Activated B cell treated with CpG ODN at 0.5 μM for 24 hours (primary cell): ENCODE measurements at regions of chr16 and their contacts with region 1.

Region 1: GRCh38 chr16:2486645-2487516 is 12.0 kb downstream of the TBC1D24 start:
- DNase-seq: peak; percentile 73
- ATAC-seq: peak; percentile 97
- H3K4me3 Mint-ChIP-seq: peak overlapping the region; percentile 71
- H3K27ac Mint-ChIP-seq: peak overlapping the region; percentile 83
- H3K4me1 Mint-ChIP-seq: peaks cover 26% of the 10 kb centered on the region
- H3K27me3 Mint-ChIP-seq: no peaks in the 10 kb centered on the region
- CTCF ChIP-seq: no peak

Region 2: GRCh38 chr16:2023098-2023925 is 463.6 kb before region 1 on chr16:
- CTCF ChIA-PET with region 1: interaction called, 3 read pairs
- POLR2A ChIA-PET with region 1: interaction called, 3 read pairs
- intact Hi-C with region 1: loop called (anchors 1 kb)
- DNase-seq: peak; percentile 97
- ATAC-seq: peak; percentile 94
- H3K4me3 Mint-ChIP-seq: peak overlapping the region; percentile 79
- H3K27ac Mint-ChIP-seq: peak overlapping the region; percentile 73
- H3K4me1 Mint-ChIP-seq: peaks cover 24% of the 10 kb centered on the region
- H3K27me3 Mint-ChIP-seq: peaks cover 27% of the 10 kb centered on the region
- CTCF ChIP-seq: peak; percentile 82

Region 3: GRCh38 chr16:2251483-2252240 is 235.2 kb before region 1 on chr16 and contains the start of gene ECI1:
- CTCF ChIA-PET with region 1: interaction called, 5 read pairs
- POLR2A ChIA-PET with region 1: interaction called, 4 read pairs
- intact Hi-C with region 1: loop called (anchors 5 kb)
- DNase-seq: peak; percentile 85
- ATAC-seq: peak; percentile 90
- H3K4me3 Mint-ChIP-seq: peak within 1 kb of the TSS; percentile 86
- H3K27ac Mint-ChIP-seq: peak within 1 kb of the TSS; percentile 90
- H3K4me1 Mint-ChIP-seq: peaks cover 35% of the 10 kb centered on the region
- H3K27me3 Mint-ChIP-seq: no peaks in the 10 kb centered on the region
- CTCF ChIP-seq: no peak
- total RNA-seq, gene ECI1: 38.1 and 43.0 TPM in 2 replicates

Region 4: DNA sequence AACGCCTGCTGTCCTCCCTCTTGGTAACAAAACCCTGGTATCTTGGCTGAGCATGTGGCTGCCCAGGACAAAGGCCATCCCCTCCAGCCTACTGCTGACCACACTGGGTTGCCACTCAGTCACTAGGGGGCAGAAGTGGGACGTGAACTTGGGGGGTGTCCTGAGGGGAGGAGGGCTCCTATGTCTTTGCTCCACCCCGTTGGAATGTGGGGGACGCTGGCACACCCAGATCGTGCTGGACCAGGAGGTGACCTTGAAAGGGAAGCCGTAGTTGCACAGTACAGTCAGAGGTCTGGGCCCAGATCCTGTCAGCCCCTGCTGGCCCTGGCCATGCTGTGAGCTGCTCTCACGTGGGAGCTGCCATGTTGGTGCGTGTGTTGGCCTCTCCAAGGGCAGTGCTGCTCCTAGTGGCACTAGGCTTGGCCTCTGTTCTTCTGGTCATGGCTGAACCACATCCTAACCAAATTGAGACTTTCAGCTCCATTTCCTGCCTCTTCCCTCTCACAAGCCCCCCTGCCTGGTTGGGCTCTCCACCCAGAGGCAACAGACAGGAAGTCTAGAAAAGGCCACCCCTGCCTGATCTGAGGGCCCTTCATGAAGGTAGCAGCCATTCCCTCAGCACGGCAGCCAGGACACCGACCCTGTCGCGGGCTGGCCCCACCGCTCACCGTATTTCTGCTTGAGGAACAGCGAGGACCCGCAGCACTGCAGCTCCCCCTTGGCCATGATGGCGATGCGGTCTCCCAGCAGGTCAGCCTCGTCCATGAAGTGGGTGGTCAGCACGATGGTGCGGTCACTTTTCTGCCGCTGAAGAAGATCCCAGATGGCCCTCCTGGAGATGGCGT is 190.0 kb before region 1 on chr16:
- CTCF ChIA-PET with region 1: no interaction called
- POLR2A ChIA-PET with region 1: no interaction called
- intact Hi-C with region 1: loop called (anchors 1 kb)
- DNase-seq: no peak
- ATAC-seq: no peak
- H3K4me3 Mint-ChIP-seq: no peak overlapping the region
- H3K27ac Mint-ChIP-seq: no peak overlapping the region
- H3K4me1 Mint-ChIP-seq: no peaks in the 10 kb centered on the region
- H3K27me3 Mint-ChIP-seq: no peaks in the 10 kb centered on the region
- CTCF ChIP-seq: no peak

Region 5: GRCh38 chr16:2429034-2429770 is 57.7 kb before region 1 on chr16 and contains the start of gene CCNF:
- CTCF ChIA-PET with region 1: interaction called, 21 read pairs
- POLR2A ChIA-PET with region 1: interaction called, 5 read pairs
- intact Hi-C with region 1: loop called (anchors 1 kb)
- DNase-seq: peak; percentile 91
- ATAC-seq: peak; percentile 97
- H3K4me3 Mint-ChIP-seq: peak within 1 kb of the TSS; percentile 85
- H3K27ac Mint-ChIP-seq: peak within 1 kb of the TSS; percentile 56
- H3K4me1 Mint-ChIP-seq: peaks cover 16% of the 10 kb centered on the region
- H3K27me3 Mint-ChIP-seq: no peaks in the 10 kb centered on the region
- CTCF ChIP-seq: no peak
- total RNA-seq, gene CCNF: 5.3 and 5.5 TPM in 2 replicates

Region 6: DNA sequence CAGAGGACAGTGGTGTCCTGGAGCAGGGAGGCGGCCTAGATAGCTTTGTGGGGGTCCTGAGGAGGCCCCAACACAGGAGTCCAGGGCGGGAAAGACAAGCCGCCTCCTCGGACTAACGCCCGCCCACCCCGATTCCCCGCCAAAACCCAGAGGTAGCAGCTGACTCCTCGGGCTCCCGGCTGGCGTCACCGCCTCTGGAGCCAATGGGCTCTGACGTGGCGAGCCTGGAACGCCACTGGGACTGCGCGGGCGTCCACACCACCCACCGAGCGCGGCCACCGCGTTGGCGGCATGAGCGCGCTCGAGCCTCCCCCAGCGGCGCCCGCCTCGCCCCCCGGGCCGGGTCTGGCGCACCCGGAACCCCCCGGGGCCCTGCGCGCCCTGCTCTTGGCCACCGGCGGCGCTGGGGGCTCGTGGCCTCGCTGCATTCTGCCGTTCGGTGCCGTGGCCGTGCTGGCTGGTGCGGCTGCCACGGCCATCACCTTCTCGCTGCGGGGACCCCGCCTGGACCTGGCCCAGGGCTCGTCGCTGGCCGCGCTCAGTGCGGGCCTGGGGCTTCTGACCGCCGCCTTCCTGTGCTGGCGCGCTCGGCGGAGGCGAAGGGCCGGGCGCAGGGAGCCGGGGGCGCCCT is 19.2 kb before region 1 on chr16:
- CTCF ChIA-PET with region 1: interaction called, 7 read pairs
- POLR2A ChIA-PET with region 1: interaction called, 6 read pairs
- intact Hi-C with region 1: loop called (anchors 2 kb)
- DNase-seq: no peak
- ATAC-seq: peak; percentile 16
- H3K4me3 Mint-ChIP-seq: no peak overlapping the region
- H3K27ac Mint-ChIP-seq: no peak overlapping the region
- H3K4me1 Mint-ChIP-seq: peaks cover 38% of the 10 kb centered on the region
- H3K27me3 Mint-ChIP-seq: peaks cover 16% of the 10 kb centered on the region
- CTCF ChIP-seq: no peak

Region 7: DNA sequence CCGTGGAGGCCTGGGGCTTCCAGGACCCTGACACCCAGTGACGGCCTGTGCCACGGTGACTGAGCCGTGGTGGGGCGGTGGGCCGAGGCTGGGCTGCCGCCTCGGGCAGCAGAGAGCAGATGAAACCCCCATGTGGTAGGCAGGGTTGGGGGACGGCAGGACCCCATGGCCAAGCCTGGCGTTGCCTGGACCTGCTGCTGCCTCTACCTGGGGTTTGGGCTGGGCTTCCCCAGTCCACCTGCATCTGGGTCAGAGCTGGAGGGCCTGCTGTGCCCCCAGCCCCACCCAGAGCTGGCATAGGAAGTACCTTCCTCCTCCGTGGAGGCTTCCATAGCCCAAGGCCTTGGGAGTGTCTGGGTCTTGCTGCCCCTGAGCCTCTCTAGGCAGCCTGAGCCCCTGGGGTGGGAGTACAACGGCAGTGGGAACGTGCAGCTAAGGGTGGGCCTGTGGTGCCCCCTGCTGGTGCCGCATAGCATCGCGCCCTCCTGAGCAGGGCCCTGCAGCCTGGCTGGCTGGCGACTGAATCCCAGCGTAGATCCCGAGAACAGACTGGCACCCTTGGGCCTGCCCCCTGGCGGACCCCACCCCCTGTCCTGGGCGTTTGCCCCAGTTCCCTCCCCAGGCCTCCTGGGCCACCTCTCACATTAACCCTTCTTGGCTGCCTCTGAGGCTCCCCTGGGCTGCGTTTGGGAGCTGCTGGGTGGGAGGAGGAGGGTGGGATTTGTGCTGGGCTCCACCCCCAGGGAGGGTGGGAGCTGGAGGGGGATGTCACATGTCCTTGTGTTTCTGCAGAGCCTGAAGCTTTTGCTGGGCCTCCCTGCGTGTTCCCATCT is 14.3 kb after region 1 on chr16:
- CTCF ChIA-PET with region 1: interaction called, 17 read pairs
- POLR2A ChIA-PET with region 1: interaction called, 6 read pairs
- intact Hi-C with region 1: loop called (anchors 1 kb)
- DNase-seq: peak; percentile 77
- ATAC-seq: peak; percentile 98
- H3K4me3 Mint-ChIP-seq: no peak overlapping the region
- H3K27ac Mint-ChIP-seq: no peak overlapping the region
- H3K4me1 Mint-ChIP-seq: peaks cover 11% of the 10 kb centered on the region
- H3K27me3 Mint-ChIP-seq: no peaks in the 10 kb centered on the region
- CTCF ChIP-seq: peak; percentile 84

Region 8: GRCh38 chr16:2614761-2615191 is 127.9 kb after region 1 on chr16:
- CTCF ChIA-PET with region 1: no interaction called
- POLR2A ChIA-PET with region 1: no interaction called
- intact Hi-C with region 1: no loop called
- DNase-seq: no peak
- ATAC-seq: no peak
- H3K4me3 Mint-ChIP-seq: no peak overlapping the region
- H3K27ac Mint-ChIP-seq: no peak overlapping the region
- H3K4me1 Mint-ChIP-seq: no peaks in the 10 kb centered on the region
- H3K27me3 Mint-ChIP-seq: no peaks in the 10 kb centered on the region
- CTCF ChIP-seq: no peak

Region 9: GRCh38 chr16:2829501-2830356 is 342.8 kb after region 1 on chr16 and contains the start of gene ZG16B:
- CTCF ChIA-PET with region 1: no interaction called
- POLR2A ChIA-PET with region 1: no interaction called
- intact Hi-C with region 1: no loop called
- DNase-seq: no peak
- ATAC-seq: no peak
- H3K4me3 Mint-ChIP-seq: no peak within 1 kb of the TSS
- H3K27ac Mint-ChIP-seq: no peak within 1 kb of the TSS
- H3K4me1 Mint-ChIP-seq: no peaks in the 10 kb centered on the region
- H3K27me3 Mint-ChIP-seq: peaks cover 20% of the 10 kb centered on the region
- CTCF ChIP-seq: no peak
- total RNA-seq, gene ZG16B: 0.33 TPM in 1 of 2 replicates, not detected in the other